AG04450 (cell line): ENCODE measurements at regions of chr1 and their contacts with region 1.

Region 1: DNA sequence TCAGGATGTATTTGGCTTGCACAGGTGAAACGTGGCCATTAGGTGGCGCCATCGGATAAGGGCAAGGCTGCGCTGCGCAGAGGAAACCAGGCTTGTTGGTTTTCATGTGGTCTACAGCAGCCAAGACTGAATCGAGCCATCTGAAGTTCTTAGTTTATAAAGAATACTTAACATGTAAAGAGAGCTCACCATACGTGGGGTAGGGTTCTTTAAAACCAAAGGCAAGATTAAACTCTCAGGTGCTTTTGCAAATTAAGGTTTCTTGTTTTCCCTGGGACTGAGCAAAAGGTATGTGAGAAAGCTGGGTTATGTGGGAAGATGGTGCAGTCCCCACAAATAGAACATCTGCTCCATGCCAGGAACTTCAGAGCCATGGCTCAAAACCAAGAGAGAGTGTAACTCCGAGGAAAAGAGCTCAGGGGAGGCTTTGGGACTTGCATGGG is 9.3 kb downstream of the MASP2 start:
- DNase-seq: peak; percentile 77
- H3K4me3 ChIP-seq: no peak overlapping the region
- H3K27ac ChIP-seq: no peak overlapping the region
- H3K27me3 ChIP-seq: peaks cover 5% of the 10 kb centered on the region
- CTCF ChIP-seq: peak; percentile 100

Region 2: DNA sequence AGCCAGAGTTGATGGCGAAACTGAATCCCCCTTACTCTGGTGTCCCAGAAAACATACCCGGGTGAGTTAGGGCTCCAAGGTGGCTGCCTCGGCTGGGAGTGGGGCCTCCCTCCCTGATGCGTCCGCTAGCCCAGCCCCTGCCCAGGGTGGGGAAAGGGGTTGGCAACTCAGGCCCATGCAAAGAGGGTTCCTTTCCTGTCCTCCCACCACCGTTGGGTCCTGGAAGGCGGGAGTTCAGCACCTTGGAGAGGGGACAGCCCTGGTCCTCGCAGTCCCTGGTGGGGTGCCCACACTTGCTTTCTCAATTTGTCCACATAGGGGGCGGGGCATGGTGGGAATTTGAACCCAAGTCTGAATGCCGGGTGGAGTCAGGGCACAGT is 16.0 kb after region 1 on chr1:
- CTCF ChIA-PET with region 1: interaction called, 84 read pairs
- POLR2A ChIA-PET with region 1: interaction called, 3 read pairs
- DNase-seq: no peak
- H3K4me3 ChIP-seq: no peak overlapping the region
- H3K27ac ChIP-seq: no peak overlapping the region
- H3K27me3 ChIP-seq: no peaks in the 10 kb centered on the region
- CTCF ChIP-seq: no peak

Region 3: DNA sequence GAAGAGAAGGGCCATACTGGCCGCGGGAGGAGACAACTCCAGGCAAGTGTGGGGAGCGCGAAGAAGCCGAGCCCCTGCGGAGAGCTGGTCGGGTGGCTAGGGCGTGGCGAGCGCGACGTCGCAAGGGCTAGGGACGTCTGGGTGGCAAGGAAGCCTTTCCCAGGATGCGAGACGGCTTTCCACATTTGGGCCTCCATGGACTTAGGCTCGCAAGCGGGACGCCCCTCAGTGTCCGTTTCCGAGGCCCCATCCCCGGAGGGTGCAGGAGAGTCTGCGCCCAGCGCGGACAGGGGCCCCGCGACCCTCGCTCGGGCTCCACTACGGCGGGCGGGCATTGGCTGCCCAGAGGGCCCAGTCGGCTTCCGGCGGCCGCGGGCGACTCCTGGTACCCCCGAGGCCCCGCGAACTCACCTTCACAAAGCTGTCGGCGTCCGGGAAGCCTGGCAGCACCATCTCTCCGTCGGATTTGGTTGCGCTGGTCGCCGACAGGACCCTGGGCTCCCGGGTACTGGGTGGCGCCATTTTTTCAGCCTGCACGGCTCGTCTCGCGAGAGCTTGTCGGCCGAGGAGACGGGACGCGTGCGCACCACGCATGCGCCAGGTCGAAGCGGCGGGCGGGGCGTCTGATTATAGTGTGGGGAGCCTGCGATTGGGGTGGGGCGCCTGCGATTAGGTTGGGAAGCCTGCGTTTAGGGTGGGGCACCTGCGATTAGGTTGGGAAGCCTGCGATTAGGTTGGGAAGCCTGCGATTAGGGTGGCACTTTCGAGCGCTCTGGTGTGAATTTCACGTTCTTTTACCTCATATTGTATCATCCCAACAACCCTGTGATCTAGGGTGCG is 61.8 kb after region 1 on chr1 and contains the start of gene EXOSC10:
- CTCF ChIA-PET with region 1: interaction called, 20 read pairs
- POLR2A ChIA-PET with region 1: no interaction called
- DNase-seq: peak; percentile 63
- H3K4me3 ChIP-seq: peak within 1 kb of the TSS; percentile 95
- H3K27ac ChIP-seq: peak within 1 kb of the TSS; percentile 52
- H3K27me3 ChIP-seq: no peaks in the 10 kb centered on the region
- CTCF ChIP-seq: no peak
- polyA plus RNA-seq, gene EXOSC10: 62.7 and 65.9 TPM in 2 replicates

Region 4: GRCh38 chr1:11168731-11169130 is 131.0 kb after region 1 on chr1:
- CTCF ChIA-PET with region 1: interaction called, 10 read pairs
- POLR2A ChIA-PET with region 1: no interaction called
- DNase-seq: no peak
- H3K4me3 ChIP-seq: no peak overlapping the region
- H3K27ac ChIP-seq: no peak overlapping the region
- H3K27me3 ChIP-seq: no peaks in the 10 kb centered on the region
- CTCF ChIP-seq: no peak

Region 5: DNA sequence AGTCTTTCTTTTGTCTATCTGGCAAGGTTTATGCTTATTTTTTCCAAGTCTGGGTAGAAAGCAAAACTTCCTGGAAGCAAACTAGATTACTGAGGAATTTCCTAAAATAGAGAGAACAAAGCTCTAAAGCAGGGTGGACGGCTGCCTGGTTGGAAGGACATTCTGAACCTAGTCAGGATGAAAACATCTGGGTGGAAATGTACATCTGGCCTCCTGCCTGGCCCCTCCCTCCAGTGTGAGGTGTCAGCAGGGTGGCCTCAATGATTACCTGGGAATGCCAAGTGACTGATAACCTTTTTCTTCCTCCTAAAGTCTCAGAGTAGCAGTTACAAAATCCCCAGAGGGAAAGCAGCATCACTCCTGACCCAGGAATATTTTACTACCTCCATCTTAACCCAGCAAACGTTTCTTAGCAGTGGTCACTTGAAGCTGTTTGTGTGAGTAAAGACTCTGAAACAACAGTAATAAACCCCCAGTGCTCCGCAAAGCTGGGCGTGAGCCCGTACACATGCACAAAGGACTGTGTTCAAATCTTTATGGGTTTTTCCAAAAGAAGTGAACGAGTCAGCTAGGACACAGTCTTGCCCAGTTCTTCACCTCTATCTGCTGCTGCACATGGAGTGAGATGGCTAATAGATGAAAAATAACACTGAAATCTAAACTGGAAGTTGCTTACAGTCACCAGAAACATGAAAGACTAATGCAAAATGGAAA is 170.3 kb after region 1 on chr1:
- CTCF ChIA-PET with region 1: interaction called, 12 read pairs
- POLR2A ChIA-PET with region 1: no interaction called
- DNase-seq: no peak
- H3K4me3 ChIP-seq: no peak overlapping the region
- H3K27ac ChIP-seq: no peak overlapping the region
- H3K27me3 ChIP-seq: no peaks in the 10 kb centered on the region
- CTCF ChIP-seq: no peak

Region 6: GRCh38 chr1:11645670-11646265 is 608.0 kb after region 1 on chr1:
- CTCF ChIA-PET with region 1: interaction called, 80 read pairs
- POLR2A ChIA-PET with region 1: no interaction called
- DNase-seq: peak; percentile 23
- H3K4me3 ChIP-seq: no peak overlapping the region
- H3K27ac ChIP-seq: no peak overlapping the region
- H3K27me3 ChIP-seq: peaks cover 25% of the 10 kb centered on the region
- CTCF ChIP-seq: peak; percentile 80